Dendritic cell treated with granulocyte-macrophage colony-stimulating factor and Interleukin-4, amounts not matched to agents 40 ng/mL and 50 ng/mL, for 4 days (primary cell): ENCODE measurements at regions of chr20 and their contacts with region 1.

Region 1: DNA sequence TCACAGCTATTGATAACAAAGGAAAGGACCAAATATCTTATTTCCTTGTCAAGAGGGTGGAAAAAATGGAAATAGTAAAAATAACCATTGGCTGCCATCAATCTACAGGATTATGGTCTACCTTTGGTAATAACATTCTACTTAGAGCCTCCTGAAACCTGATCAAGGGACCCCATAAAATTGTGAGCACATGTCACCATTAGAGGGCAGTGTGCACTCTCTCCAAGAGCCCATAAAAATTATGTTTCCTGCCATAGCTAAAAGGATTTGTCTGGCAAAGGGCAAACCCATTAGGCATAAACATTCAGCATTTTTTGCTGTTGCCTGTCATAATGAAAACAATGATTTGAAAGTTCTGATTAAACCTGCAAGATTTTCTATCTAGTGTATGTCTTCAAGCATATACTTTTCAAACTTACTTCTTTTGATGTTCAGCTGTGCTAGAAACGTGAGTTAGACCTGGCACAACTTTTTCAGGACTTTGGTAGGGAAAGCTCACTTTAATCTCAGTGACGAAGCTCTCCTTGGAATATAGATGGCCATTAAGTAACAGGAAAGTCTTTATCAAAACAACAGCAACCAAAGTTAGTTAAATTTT is 120.7 kb upstream of the ZFP64 start:
- H3K4me3 Mint-ChIP-seq: no peak overlapping the region
- H3K27ac Mint-ChIP-seq: no peak overlapping the region
- H3K4me1 Mint-ChIP-seq: peaks cover 5% of the 10 kb centered on the region
- H3K27me3 Mint-ChIP-seq: peaks cover 8% of the 10 kb centered on the region

Region 2: GRCh38 chr20:52160621-52161204 is 151.5 kb before region 1 on chr20:
- intact Hi-C with region 1: no loop called
- H3K4me3 Mint-ChIP-seq: no peak overlapping the region
- H3K27ac Mint-ChIP-seq: no peak overlapping the region
- H3K4me1 Mint-ChIP-seq: no peaks in the 10 kb centered on the region
- H3K27me3 Mint-ChIP-seq: no peaks in the 10 kb centered on the region

Region 3: DNA sequence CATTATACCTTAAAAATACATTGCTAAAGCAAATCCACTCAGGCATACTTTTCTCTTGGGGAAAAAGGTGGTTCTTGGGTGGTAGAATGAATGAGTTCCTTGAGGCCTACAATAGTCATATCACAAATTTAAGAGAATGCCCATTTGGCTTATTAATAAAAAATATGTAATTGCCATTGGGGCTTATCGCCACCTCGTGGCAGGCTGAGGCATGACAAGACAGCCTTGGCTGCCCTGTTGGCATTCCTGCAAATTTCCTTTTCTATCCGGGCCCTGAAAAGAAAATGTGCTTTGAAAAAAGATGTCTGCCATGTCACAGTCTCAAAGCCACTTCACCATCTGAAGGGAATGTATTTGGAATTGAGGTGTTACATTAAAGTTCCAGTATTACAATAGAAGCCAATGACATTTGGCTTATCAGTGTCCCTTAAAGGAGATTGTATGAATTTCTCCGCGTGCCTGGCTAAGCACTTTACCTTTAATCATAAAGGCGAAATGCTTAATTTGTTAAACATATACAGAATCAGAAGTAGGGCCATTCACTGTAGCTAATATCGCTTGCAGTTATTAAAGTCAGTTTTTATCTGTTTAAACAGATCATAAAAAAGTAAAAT is 67.6 kb after region 1 on chr20:
- intact Hi-C with region 1: loop called (anchors 2 kb)
- H3K4me3 Mint-ChIP-seq: no peak overlapping the region
- H3K27ac Mint-ChIP-seq: no peak overlapping the region
- H3K4me1 Mint-ChIP-seq: no peaks in the 10 kb centered on the region
- H3K27me3 Mint-ChIP-seq: peaks cover 4% of the 10 kb centered on the region

Region 4: DNA sequence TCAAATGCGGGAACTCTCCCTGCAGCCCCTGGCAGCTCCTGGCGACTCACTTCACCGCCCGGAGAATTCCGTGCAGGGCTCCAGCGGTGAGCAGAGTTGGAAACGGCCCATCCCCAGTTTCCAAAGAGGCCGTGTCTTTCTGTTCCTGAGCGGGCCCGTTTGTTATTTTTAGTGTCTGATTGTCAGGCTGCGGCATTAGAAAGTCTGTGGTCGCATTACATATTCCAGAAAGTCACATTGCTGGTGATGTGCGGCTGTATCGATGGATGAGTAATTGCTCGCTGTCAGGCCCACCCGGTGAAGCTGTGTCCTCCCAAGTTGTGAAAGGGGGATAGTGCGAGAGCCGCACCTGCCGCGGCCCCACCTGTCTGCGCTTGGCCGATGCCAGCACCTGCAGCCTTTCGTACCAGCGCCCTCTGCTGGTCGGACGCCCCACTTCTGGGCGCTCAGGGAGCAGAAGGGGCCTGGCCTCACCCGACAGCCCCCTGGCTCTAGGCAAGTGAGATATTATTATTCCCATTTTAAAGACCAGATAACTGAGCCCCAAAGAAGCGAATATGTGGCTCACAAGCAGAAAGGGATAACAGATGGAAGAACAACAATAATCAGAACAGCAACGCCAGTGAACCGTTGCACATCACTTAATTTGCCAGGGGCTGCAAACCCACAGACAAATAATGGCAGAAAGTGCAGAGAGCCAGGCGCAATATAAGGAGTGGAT is 904.8 kb after region 1 on chr20:
- intact Hi-C with region 1: loop called (anchors 5 kb)
- H3K4me3 Mint-ChIP-seq: no peak overlapping the region
- H3K27ac Mint-ChIP-seq: no peak overlapping the region
- H3K4me1 Mint-ChIP-seq: no peaks in the 10 kb centered on the region
- H3K27me3 Mint-ChIP-seq: peaks cover 8% of the 10 kb centered on the region